ENCODE measurements at regions of chr1 and their contacts with region 1.

Region 1: DNA sequence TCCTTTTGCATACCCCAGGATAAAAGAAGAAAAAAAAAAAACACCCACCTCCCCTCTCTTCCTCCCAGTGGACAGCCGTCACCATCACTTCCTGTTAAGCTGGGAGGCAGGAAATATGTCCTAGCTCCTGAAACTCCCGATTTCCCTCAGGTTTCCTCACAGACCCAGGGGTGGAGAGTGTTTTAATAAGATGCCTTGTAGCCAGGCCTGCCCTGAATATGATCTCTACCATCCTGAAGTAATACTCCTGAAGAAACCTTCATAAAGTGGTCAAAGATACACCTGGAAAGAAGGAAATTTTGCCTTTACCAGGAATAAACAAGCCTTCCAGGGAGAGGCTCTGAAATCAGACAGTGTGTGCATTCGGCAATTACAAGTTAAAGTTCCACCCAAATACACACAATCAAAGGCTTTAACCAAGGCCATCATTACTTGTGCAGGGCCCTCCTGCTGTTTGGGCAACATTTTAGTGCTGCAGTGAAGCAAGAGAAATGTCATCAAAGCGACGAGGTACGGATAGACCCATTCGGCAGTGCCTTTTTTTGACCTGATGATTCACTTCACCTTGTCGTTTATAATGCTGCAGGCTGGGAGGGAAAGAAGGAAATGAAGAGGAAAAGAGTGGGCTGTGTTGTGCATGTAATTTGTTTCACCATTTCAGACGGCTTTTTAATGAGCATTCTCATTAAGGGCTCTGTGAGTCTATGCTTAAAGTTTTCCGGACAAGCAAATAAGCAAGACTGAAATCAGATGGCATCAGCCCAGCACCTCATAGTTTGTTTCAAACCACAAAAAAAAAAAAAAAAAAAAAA is 41.0 kb upstream of the RASAL2 start:
- DNase-seq: no peak
- ATAC-seq: no peak
- H3K4me3 Mint-ChIP-seq: no peak overlapping the region
- H3K27ac Mint-ChIP-seq: peak overlapping the region; percentile 6; the same call in 1 of the 2 replicates
- H3K4me1 Mint-ChIP-seq: peaks cover 63% of the 10 kb centered on the region
- H3K27me3 Mint-ChIP-seq: no peaks in the 10 kb centered on the region
- CTCF ChIP-seq: no peak

Region 2: DNA sequence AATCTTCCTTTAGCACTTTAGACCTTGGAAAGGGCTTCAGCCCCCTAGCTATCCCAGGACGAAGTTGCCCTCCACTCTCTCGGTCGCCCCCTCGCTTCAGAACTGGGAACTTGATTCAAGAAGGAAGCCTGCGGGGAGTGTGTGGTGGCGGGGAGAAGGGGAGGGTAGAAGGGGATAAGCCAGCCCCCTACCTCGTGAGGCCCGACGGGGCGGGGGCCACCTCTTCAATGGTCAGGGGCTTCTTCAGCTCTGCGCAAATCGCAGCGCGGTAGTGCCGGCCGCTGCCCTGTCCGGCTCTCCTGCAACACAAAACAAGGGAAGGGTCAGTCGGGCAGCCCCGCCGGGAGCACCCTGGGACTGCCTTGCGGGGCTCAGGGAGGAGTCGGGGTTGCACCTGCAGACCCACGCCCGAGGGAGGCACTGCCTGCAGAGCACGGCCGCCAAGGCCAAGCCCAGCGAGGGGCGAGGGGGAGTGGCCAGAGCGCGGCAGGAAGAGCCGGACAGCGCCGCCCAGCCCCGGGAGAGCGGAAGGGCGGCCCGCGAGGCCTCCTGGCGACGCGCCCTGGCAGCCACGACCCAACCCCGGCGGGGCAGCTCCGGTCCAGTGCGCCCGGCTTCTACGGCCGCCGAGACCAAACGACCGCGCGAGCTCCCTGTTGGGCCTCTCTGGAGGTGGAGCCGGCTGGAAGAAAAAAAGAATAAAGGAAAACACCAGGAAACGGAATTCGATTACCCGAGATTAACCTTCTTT is 15.2 kb before region 1 on chr1:
- CTCF ChIA-PET with region 1: interaction called, 43 read pairs
- POLR2A ChIA-PET with region 1: no interaction called
- DNase-seq: peak; percentile 85
- ATAC-seq: peak; percentile 94
- H3K4me3 Mint-ChIP-seq: peak overlapping the region; percentile 58
- H3K27ac Mint-ChIP-seq: no peak overlapping the region
- H3K4me1 Mint-ChIP-seq: peaks cover 17% of the 10 kb centered on the region
- H3K27me3 Mint-ChIP-seq: peaks cover 2% of the 10 kb centered on the region; the same call in 1 of the 2 replicates
- CTCF ChIP-seq: peak; percentile 56

Region 3: DNA sequence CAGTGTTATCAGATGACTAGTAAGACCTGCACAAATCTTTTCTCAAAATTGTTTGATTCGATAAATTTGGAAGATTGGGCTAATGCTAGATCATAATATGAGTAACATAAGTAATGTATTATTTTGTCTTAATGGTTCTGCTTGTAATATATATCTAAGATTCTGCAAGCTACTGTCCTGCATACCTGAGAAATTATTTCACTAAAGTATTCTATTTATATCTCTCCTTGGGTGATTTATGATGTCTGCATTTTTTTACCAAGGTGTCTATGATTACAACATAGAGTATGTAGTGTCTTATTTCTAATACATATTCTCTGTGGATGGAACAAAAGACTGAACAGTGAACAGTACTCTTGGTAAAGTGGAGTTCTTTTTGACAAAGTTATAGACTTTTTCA is 277.3 kb after region 1 on chr1:
- CTCF ChIA-PET with region 1: no interaction called
- POLR2A ChIA-PET with region 1: no interaction called
- DNase-seq: no peak
- ATAC-seq: no peak
- H3K4me3 Mint-ChIP-seq: no peak overlapping the region
- H3K27ac Mint-ChIP-seq: no peak overlapping the region
- H3K4me1 Mint-ChIP-seq: peaks cover 11% of the 10 kb centered on the region
- H3K27me3 Mint-ChIP-seq: no peaks in the 10 kb centered on the region
- CTCF ChIP-seq: no peak